GM12878 (cell line): ENCODE measurements at regions of chr2 and their contacts with region 1.

Region 1: GRCh38 chr2:47724221-47724981 is 58.5 kb upstream of the MSH6 start:
- DNase-seq: peak; percentile 100
- ATAC-seq: peak; percentile 92
- H3K4me3 ChIP-seq: no peak overlapping the region
- H3K27ac ChIP-seq: peak overlapping the region; percentile 77
- H3K4me1 ChIP-seq: peaks cover 49% of the 10 kb centered on the region
- H3K27me3 ChIP-seq: no peaks in the 10 kb centered on the region
- CTCF ChIP-seq: no peak
- EP300 ChIP-seq: peak; percentile 97
- POLR2A ChIP-seq: 0 out of 2 replicates have a peak, but pooled peaks have one; percentile 20
- RAD21 ChIP-seq: no peak

Region 2: DNA sequence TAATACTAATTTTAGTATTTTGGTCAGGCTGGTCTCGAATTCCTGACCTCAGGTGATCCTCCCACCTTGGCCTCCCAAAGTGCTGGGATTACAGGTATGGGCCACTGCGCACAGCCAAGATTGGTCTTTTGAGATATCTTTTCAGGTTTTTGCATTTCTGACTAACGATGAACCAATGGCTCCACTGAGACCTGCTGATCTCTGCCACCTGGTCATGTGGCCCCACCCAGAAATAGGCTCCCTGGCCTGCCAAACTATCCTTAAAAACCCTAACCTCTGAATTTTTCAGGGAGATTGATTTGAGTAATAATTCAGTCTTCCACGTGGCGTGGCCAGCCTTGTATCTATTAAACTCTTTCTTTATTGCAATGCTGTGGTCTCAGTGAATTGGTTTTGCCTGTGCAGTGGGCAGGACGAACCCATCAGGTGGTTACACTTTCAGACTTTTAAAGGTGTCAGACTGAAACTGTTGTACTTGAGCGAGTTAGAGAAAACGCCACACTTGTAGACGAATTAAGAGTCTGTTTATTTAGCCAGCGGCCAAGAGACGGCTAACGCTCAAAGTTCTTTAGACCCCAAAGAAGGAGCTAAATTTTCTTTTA is 27.3 kb before region 1 on chr2:
- CTCF ChIA-PET with region 1: interaction called, 3 read pairs
- POLR2A ChIA-PET with region 1: interaction called, 3 read pairs
- RAD21 ChIA-PET with region 1: interaction called, 4 read pairs
- SMC1A ChIA-PET with region 1: interaction called, 7 read pairs
- in situ Hi-C with region 1: no loop called
- intact Hi-C with region 1: loop called (anchors 2 kb)
- DNase-seq: peak; percentile 41
- ATAC-seq: peak; percentile 94
- H3K4me3 ChIP-seq: 0 out of 2 replicates have a peak overlapping the region, but pooled peaks have one; percentile 19
- H3K27ac ChIP-seq: no peak overlapping the region
- H3K4me1 ChIP-seq: peaks cover 24% of the 10 kb centered on the region
- H3K27me3 ChIP-seq: no peaks in the 10 kb centered on the region
- CTCF ChIP-seq: no peak
- EP300 ChIP-seq: 0 out of 4 replicates have a peak, but pooled peaks of 1 of the 2 experiments have one; percentile 18
- POLR2A ChIP-seq: no peak
- RAD21 ChIP-seq: no peak

Region 3: DNA sequence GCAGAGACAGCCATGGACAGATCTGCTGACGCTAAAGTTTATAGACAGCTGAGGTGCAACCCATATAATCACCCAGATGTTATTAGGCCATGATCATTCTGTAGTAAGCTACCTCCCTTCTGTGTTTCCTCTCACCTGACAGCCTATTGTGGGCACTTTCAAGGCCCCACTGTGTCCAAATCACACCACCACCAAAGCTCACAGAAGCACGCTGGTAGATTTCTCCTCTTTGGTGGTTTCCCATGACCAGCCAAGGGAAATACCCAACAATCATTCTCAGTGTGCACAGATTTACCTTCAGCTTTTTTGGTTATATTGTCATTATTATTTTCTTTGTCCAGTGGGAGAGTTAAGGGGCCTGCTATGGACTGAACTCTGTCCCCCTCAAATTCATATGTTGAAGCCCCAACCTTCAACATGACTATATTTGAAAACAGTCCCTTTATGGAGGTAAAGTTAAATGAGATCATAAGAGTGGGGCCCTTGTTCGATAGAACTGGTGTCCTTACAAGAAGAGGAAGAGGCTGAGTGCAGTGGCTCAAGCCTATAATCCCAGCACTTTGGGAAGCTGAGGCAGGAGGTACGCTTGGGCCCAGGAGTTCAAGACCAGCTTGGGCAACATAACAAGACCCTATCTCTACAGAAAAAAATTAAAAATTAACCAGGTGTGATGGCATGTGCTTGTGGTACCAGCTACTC is 15.5 kb before region 1 on chr2:
- CTCF ChIA-PET with region 1: interaction called, 6 read pairs
- POLR2A ChIA-PET with region 1: interaction called, 4 read pairs
- RAD21 ChIA-PET with region 1: interaction called, 6 read pairs
- SMC1A ChIA-PET with region 1: interaction called, 29 read pairs
- in situ Hi-C with region 1: no loop called
- intact Hi-C with region 1: no loop called
- DNase-seq: peak; percentile 50
- ATAC-seq: peak; percentile 96
- H3K4me3 ChIP-seq: no peak overlapping the region
- H3K27ac ChIP-seq: peak overlapping the region; percentile 10; the same call in 1 of the 2 replicates
- H3K4me1 ChIP-seq: peaks cover 14% of the 10 kb centered on the region
- H3K27me3 ChIP-seq: no peaks in the 10 kb centered on the region
- CTCF ChIP-seq: no peak
- EP300 ChIP-seq: 0 out of 4 replicates have a peak, but pooled peaks of 1 of the 2 experiments have one; percentile 48
- POLR2A ChIP-seq: no peak
- RAD21 ChIP-seq: no peak

Region 4: GRCh38 chr2:47735136-47735869 is 10.9 kb after region 1 on chr2:
- CTCF ChIA-PET with region 1: interaction called, 6 read pairs
- POLR2A ChIA-PET with region 1: interaction called, 8 read pairs
- RAD21 ChIA-PET with region 1: interaction called, 3 read pairs
- SMC1A ChIA-PET with region 1: interaction called, 28 read pairs
- in situ Hi-C with region 1: no loop called
- intact Hi-C with region 1: no loop called
- DNase-seq: no peak
- ATAC-seq: peak; percentile 12
- H3K4me3 ChIP-seq: no peak overlapping the region
- H3K27ac ChIP-seq: no peak overlapping the region
- H3K4me1 ChIP-seq: peaks cover 9% of the 10 kb centered on the region
- H3K27me3 ChIP-seq: no peaks in the 10 kb centered on the region
- CTCF ChIP-seq: no peak
- EP300 ChIP-seq: no peak
- POLR2A ChIP-seq: no peak
- RAD21 ChIP-seq: no peak

Region 5: DNA sequence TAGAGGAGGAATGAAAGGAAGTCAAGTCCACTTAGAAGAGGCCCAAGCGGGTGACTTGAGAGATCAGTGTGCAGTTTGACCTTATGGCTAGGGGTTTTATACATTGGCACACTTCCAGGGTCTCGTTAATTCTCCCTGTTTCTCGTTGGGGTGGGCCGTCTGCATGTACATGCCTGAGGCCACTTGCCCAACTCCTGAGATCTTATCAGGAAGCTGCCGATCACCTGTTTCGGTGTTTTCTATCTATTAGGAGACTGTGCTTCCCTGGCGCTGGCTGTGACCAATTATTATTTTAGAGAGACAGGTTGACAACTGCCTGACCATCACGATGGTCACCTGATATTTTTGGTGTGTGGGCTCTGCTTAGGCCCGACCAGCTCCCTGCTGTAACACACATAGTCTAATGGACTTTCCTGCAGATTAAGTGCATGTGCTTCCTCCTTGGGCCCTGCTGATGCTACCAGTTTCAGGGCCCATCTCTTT is 27.5 kb after region 1 on chr2:
- CTCF ChIA-PET with region 1: interaction called, 6 read pairs
- POLR2A ChIA-PET with region 1: interaction called, 43 read pairs
- RAD21 ChIA-PET with region 1: interaction called, 52 read pairs
- SMC1A ChIA-PET with region 1: interaction called, 36 read pairs
- in situ Hi-C with region 1: no loop called
- intact Hi-C with region 1: loop called (anchors 1 kb)
- DNase-seq: no peak
- ATAC-seq: peak; percentile 6
- H3K4me3 ChIP-seq: no peak overlapping the region
- H3K27ac ChIP-seq: peak overlapping the region; percentile 87
- H3K4me1 ChIP-seq: peaks cover 33% of the 10 kb centered on the region
- H3K27me3 ChIP-seq: no peaks in the 10 kb centered on the region
- CTCF ChIP-seq: no peak
- EP300 ChIP-seq: no peak
- POLR2A ChIP-seq: no peak
- RAD21 ChIP-seq: no peak

Region 6: DNA sequence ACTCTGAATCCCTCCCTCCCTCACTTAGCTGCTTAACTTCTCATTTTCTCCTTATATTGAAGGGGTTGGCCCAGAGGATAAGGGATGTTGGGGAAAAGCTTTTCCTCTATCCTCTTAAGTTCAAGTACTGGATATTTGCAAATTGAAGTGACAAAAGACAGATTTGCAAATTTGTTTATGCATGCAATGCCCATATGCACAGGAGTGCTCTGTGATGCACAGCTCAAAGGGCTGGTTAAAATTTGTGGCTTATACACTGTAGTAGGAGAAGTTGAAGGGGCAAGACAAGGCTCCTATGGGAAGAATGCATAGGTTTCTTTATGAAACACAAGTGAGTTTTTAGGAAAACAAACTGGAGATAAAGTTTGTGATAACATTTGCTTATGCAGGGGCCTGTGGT is 50.2 kb after region 1 on chr2:
- CTCF ChIA-PET with region 1: no interaction called
- POLR2A ChIA-PET with region 1: no interaction called
- RAD21 ChIA-PET with region 1: no interaction called
- SMC1A ChIA-PET with region 1: no interaction called
- in situ Hi-C with region 1: no loop called
- intact Hi-C with region 1: no loop called
- DNase-seq: no peak
- ATAC-seq: no peak
- H3K4me3 ChIP-seq: no peak overlapping the region
- H3K27ac ChIP-seq: no peak overlapping the region
- H3K4me1 ChIP-seq: no peaks in the 10 kb centered on the region
- H3K27me3 ChIP-seq: no peaks in the 10 kb centered on the region
- CTCF ChIP-seq: no peak
- EP300 ChIP-seq: no peak
- POLR2A ChIP-seq: no peak
- RAD21 ChIP-seq: no peak